ENCODE measurements at regions of chr9 and their contacts with region 1.

Region 1: GRCh38 chr9:128296337-128297220 is 20.5 kb downstream of the SWI5 start:
- DNase-seq: no peak
- ATAC-seq: no peak

Region 2: DNA sequence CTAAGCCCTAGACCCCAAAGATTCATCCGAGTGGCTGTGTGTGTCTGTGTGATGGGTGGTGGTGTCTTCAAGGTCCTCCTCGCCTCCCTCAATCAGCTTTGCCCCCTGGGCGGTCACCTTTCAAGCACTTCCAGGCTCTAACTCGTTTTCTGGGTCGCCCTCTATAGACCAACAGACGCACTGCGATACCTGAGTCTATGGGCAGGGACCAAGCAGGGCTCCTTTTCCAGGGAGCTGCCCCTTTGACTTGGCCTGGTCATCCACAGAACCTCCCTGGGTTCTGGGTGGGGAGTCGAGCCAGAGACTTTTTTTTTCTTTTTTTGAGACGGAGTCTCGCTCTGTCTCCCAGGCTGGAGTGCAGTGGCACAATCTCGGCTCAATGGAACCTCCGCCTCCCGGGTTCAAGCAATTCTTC is 44.9 kb after region 1 on chr9:
- intact Hi-C with region 1: loop called (anchors 1 kb)
- DNase-seq: peak; percentile 67
- ATAC-seq: peak; percentile 68